ENCODE measurements at regions of chr14 and their contacts with region 1.

Region 1: DNA sequence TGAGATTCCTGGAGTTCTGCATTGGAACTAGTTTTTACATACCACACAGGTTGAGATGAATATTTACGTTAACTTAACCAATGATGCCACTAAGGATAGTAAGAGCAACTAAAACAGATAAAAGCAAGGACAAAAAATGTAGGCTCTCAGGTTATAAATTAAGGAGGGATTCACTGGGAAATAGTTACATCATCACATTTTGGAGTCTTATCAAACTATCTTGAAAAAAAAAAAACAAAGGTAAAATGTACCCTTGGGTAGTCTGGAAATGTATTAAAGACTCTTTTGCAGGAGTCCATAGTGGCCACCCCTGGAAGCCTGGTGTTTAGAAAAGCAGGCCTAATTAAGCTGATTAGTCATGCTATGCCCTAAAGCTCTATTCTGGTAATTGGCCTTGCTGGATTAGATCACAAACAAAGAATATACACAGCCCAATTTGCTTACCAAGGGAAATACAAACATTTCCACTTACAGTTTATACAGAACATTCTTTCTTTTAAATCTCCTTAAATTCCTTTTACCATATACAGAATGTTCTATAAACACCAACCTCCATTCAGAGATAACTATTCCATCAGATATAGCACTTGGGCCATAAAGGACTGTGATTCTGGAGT is 39.3 kb downstream of the SLC25A47 start:
- DNase-seq: no peak
- ATAC-seq: no peak
- H3K4me3 ChIP-seq: no peak overlapping the region
- H3K27ac ChIP-seq: no peak overlapping the region
- H3K4me1 ChIP-seq: no peaks in the 10 kb centered on the region
- H3K27me3 ChIP-seq: no peaks in the 10 kb centered on the region
- CTCF ChIP-seq: no peak
- EP300 ChIP-seq: no peak
- POLR2A ChIP-seq: no peak
- RAD21 ChIP-seq: no peak

Region 2: GRCh38 chr14:100348784-100349704 is 13.4 kb before region 1 on chr14:
- CTCF ChIA-PET with region 1: no interaction called
- POLR2A ChIA-PET with region 1: interaction called, 39 read pairs
- in situ Hi-C with region 1: no loop called
- intact Hi-C with region 1: no loop called
- DNase-seq: no peak
- ATAC-seq: 0 out of 3 replicates have a peak, but pooled peaks have one; percentile 3
- H3K4me3 ChIP-seq: no peak overlapping the region
- H3K27ac ChIP-seq: no peak overlapping the region
- H3K4me1 ChIP-seq: peaks cover 0 to 5% of the 10 kb centered on the region in 2 experiments; a peak in 2 of 5 replicates
- H3K27me3 ChIP-seq: no peaks in the 10 kb centered on the region
- CTCF ChIP-seq: no peak
- EP300 ChIP-seq: no peak
- POLR2A ChIP-seq: no peak
- RAD21 ChIP-seq: no peak